ENCODE measurements at regions of chr9 and their contacts with region 1.

Region 1: GRCh38 chr9:94912700-94913249 is 186.3 kb downstream of the AOPEP start:
- DNase-seq: peak; percentile 94
- ATAC-seq: peak; percentile 71
- H3K4me3 ChIP-seq: peak overlapping the region; percentile 7
- H3K27ac ChIP-seq: peak overlapping the region; percentile 74
- H3K4me1 ChIP-seq: peaks cover 59% of the 10 kb centered on the region
- H3K27me3 ChIP-seq: no peaks in the 10 kb centered on the region
- CTCF ChIP-seq: no peak

Region 2: GRCh38 chr9:94717761-94718160 is 195.0 kb before region 1 on chr9:
- CTCF ChIA-PET with region 1: no interaction called
- POLR2A ChIA-PET with region 1: no interaction called
- intact Hi-C with region 1: no loop called
- DNase-seq: peak; percentile 81
- ATAC-seq: peak; percentile 62
- H3K4me3 ChIP-seq: no peak overlapping the region
- H3K27ac ChIP-seq: peak overlapping the region; percentile 93
- H3K4me1 ChIP-seq: peaks cover 40% of the 10 kb centered on the region
- H3K27me3 ChIP-seq: no peaks in the 10 kb centered on the region
- CTCF ChIP-seq: no peak

Region 3: DNA sequence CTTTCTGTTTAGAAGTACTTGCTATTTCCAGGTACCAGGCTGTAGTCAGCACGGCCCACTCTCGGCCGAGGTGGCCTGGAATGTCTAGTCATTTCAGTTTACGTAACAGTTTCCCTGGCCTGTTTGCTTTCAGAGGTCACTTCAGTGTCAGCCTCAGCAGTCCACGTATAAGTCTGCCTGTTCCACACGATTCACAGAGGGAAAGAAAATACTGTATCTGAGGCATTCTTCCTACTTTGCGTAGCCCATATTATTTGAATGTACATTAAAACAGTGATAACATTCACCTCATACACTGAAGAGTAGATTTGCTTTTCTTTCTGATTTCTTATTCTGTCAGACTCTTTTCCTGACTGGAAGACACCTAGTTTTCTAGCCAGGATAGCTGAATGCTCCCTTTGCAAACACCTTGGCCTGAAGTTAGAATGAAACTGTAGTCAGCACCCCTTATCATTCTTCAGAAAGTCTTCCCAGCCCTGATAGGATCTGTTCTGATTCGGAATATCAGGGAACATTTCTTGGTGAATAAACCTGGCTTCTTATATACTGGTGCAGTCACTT is 45.4 kb before region 1 on chr9:
- CTCF ChIA-PET with region 1: no interaction called
- POLR2A ChIA-PET with region 1: no interaction called
- intact Hi-C with region 1: loop called (anchors 2 kb)
- DNase-seq: peak; percentile 79
- ATAC-seq: peak; percentile 48
- H3K4me3 ChIP-seq: peak overlapping the region; percentile 52
- H3K27ac ChIP-seq: peak overlapping the region; percentile 99
- H3K4me1 ChIP-seq: peaks cover 68% of the 10 kb centered on the region
- H3K27me3 ChIP-seq: no peaks in the 10 kb centered on the region
- CTCF ChIP-seq: no peak

Region 4: GRCh38 chr9:95302479-95302878 is 389.7 kb after region 1 on chr9:
- CTCF ChIA-PET with region 1: no interaction called
- POLR2A ChIA-PET with region 1: no interaction called
- intact Hi-C with region 1: no loop called
- DNase-seq: no peak
- ATAC-seq: no peak
- H3K4me3 ChIP-seq: no peak overlapping the region
- H3K27ac ChIP-seq: no peak overlapping the region
- H3K4me1 ChIP-seq: peaks cover 22% of the 10 kb centered on the region
- H3K27me3 ChIP-seq: no peaks in the 10 kb centered on the region
- CTCF ChIP-seq: no peak